ENCODE measurements at regions of chr9 and their contacts with region 1.

Region 1: GRCh38 chr9:95570150-95570549 is 53.4 kb upstream of the PTCH1 start:
- DNase-seq: no peak
- H3K4me3 ChIP-seq: peak overlapping the region in 47 of 59 donors; percentile 4 to 60 (median 35)
- H3K27ac ChIP-seq: no peak overlapping the region
- H3K27me3 ChIP-seq: peaks cover 0 to 24% (median 0%) of the 10 kb centered on the region in 45 donors
- CTCF ChIP-seq: no peak

Region 2: DNA sequence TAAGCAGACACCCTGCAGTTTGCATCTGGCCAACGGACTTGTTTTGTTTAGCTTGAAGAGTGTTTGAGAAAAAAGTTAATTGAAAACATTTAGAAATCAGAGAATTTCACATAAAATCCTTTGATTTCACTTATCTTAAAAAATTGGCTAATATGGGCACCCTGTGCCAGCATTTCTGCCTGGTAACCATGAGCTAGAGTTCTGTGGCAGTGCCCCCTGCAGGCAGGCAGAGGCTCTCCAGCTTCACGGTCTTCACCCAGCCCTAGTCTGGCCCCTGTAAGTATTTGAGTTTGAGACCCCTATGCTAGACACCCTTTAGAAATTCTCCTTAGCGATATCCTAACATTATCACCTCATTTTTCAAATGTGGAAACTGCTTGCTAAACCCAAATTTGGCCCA is 233.9 kb before region 1 on chr9:
- intact Hi-C with region 1: loop called in 1 of 2 experiments (anchors 10 kb)
- DNase-seq: no peak
- H3K4me3 ChIP-seq: no peak overlapping the region
- H3K27ac ChIP-seq: no peak overlapping the region
- H3K27me3 ChIP-seq: peaks cover 0 to 3% (median 0%) of the 10 kb centered on the region in 45 donors
- CTCF ChIP-seq: peak in 50 of 56 donors; percentile 8 to 63 (median 46)

Measured in dorsolateral prefrontal cortex (tissue), 120 donors.